CD4-positive, alpha-beta memory T cell (primary cell): ENCODE measurements at regions of chr5 and their contacts with region 1.

Region 1: GRCh38 chr5:142024771-142025304 is 12.0 kb upstream of the GNPDA1 start:
- DNase-seq: peak; percentile 78 to 86 (median 81)
- H3K4me3 ChIP-seq: peak overlapping the region; percentile 37 to 52
- H3K4me3 Mint-ChIP-seq: peak overlapping the region; percentile 84 to 94 (median 88)
- H3K27ac ChIP-seq: peak overlapping the region; percentile 57
- H3K27ac Mint-ChIP-seq: peak overlapping the region; percentile 93 to 99 (median 98)
- H3K4me1 ChIP-seq: peaks cover 13% of the 10 kb centered on the region
- H3K4me1 Mint-ChIP-seq: peaks cover 16 to 23% (median 19%) of the 10 kb centered on the region in 4 donors
- H3K27me3 ChIP-seq: no peaks in the 10 kb centered on the region
- H3K27me3 Mint-ChIP-seq: no peaks in the 10 kb centered on the region

Region 2: GRCh38 chr5:142095651-142096330 is 71.0 kb after region 1 on chr5:
- CTCF ChIA-PET with region 1: interaction called, 5 read pairs
- POLR2A ChIA-PET with region 1: interaction called, 18 read pairs
- intact Hi-C with region 1: loop called (anchors 2 kb)
- DNase-seq: peak; percentile 85 to 93 (median 91)
- H3K4me3 ChIP-seq: peak overlapping the region in 1 of 2 donors; percentile 27
- H3K4me3 Mint-ChIP-seq: peak overlapping the region; percentile 37 to 73 (median 57)
- H3K27ac ChIP-seq: peak overlapping the region; percentile 84
- H3K27ac Mint-ChIP-seq: peak overlapping the region; percentile 92 to 98 (median 96)
- H3K4me1 ChIP-seq: peaks cover 48% of the 10 kb centered on the region
- H3K4me1 Mint-ChIP-seq: peaks cover 31 to 51% (median 36%) of the 10 kb centered on the region in 4 donors
- H3K27me3 ChIP-seq: no peaks in the 10 kb centered on the region
- H3K27me3 Mint-ChIP-seq: no peaks in the 10 kb centered on the region